HEK293 (cell line): ENCODE measurements at regions of chr9 and their contacts with region 1.

Region 1: DNA sequence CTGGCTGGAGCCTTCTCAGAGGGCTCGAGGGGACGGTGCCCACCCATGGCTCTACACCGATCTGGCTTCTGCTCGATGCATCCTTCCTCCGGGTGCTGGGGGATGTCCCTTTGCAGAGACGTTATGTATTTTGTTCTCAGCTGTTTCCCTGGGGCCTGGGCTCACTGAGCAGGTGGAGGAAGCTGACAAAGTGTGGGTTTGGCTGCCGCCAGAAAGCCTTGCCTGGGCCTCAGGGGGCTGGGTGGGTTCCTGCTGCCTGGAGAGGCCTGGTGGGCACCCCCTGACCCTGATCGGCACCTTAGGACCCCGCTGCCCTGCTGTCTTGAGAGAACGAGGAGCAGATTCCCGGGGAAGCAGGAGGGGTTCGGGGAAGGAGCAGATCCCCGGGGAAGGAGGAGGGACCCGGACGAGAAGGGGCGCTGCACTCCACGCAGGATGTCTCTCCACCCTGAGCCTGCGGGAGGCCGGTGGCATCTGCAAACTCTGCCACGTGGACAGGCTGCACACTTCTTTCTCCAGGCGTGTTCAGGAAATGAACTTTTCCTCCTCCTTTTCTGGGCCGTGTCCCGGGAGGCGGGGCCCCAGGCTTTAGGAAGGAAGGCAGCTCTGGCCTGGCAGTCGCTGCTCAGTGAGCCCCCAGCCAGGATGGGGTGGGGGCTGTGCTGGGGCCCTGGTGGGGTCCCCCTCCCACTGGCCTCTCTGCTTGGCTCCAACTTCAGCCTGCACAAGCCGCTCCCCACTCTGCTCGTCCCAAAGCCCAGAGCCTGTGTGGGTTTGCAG is 148.9 kb downstream of the RXRA start:
- H3K4me3 ChIP-seq: no peak overlapping the region
- H3K27ac ChIP-seq: no peak overlapping the region
- H3K4me1 ChIP-seq: no peaks in the 10 kb centered on the region
- CTCF ChIP-seq: no peak

Region 2: DNA sequence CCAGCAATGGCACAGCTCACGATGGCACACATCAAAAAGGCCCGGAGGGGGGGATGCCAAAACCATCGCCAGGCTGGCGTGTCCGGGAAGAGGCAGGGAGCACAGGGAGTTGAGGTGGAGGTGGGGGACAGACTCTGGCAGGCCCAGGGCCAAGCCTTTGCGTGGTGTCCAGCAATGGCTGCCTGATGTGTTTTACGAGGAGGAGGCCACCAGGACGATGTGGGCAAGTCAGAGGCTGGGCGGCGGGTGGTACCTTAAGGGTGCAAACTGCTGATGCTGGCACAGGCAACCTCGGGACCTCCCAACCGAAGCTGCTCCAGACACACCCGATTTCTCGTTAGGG is 487.8 kb before region 1 on chr9:
- CTCF ChIA-PET with region 1: no interaction called
- POLR2A ChIA-PET with region 1: interaction called, 10 read pairs
- H3K4me3 ChIP-seq: no peak overlapping the region
- H3K27ac ChIP-seq: no peak overlapping the region
- H3K4me1 ChIP-seq: peaks cover 2% of the 10 kb centered on the region; the same call in 1 of the 2 replicates
- CTCF ChIP-seq: no peak

Region 3: GRCh38 chr9:134503301-134504105 is 28.3 kb after region 1 on chr9:
- CTCF ChIA-PET with region 1: no interaction called
- POLR2A ChIA-PET with region 1: no interaction called
- H3K4me3 ChIP-seq: no peak overlapping the region
- H3K27ac ChIP-seq: no peak overlapping the region
- H3K4me1 ChIP-seq: no peaks in the 10 kb centered on the region
- CTCF ChIP-seq: no peak

Region 4: DNA sequence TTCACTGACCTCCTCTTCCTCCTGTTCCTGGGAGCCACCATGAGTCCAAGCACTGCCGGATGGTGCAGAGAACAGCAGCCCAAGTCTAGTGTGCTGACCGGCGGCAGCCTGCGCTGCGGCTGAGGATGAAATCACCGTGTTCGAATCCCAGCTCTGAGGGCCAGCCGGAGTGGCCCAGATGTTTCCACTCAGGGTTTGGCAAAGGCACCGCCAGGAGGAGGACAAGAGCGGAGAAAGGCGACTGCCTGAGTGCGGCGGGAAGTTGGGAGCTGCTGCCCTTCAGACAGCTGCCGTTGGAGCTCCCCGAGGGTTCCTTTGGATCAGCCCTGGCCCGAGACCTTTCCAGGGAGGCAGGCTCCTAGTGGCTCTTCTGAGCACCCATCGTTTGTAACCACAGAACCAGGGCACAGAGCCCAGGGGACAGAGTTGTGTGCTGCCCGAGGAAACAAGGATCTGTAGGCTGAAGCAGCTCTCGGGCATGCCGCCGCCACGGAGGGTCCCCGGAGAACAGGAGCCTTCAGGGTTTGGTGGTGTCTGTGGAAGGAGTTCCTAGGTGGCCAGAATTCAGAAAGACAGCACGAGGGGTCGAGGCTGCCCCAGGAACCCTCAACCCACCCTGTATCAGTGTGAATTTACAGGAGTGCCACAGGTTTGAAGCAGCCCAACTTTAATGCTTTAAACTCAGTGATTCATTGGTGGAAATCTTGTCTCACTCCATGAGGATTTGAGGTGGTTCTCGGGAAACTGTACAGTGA is 50.8 kb after region 1 on chr9:
- CTCF ChIA-PET with region 1: no interaction called
- POLR2A ChIA-PET with region 1: no interaction called
- H3K4me3 ChIP-seq: no peak overlapping the region
- H3K27ac ChIP-seq: no peak overlapping the region
- H3K4me1 ChIP-seq: no peaks in the 10 kb centered on the region
- CTCF ChIP-seq: no peak